ENCODE measurements at regions of chr1 and their contacts with region 1.

Region 1: DNA sequence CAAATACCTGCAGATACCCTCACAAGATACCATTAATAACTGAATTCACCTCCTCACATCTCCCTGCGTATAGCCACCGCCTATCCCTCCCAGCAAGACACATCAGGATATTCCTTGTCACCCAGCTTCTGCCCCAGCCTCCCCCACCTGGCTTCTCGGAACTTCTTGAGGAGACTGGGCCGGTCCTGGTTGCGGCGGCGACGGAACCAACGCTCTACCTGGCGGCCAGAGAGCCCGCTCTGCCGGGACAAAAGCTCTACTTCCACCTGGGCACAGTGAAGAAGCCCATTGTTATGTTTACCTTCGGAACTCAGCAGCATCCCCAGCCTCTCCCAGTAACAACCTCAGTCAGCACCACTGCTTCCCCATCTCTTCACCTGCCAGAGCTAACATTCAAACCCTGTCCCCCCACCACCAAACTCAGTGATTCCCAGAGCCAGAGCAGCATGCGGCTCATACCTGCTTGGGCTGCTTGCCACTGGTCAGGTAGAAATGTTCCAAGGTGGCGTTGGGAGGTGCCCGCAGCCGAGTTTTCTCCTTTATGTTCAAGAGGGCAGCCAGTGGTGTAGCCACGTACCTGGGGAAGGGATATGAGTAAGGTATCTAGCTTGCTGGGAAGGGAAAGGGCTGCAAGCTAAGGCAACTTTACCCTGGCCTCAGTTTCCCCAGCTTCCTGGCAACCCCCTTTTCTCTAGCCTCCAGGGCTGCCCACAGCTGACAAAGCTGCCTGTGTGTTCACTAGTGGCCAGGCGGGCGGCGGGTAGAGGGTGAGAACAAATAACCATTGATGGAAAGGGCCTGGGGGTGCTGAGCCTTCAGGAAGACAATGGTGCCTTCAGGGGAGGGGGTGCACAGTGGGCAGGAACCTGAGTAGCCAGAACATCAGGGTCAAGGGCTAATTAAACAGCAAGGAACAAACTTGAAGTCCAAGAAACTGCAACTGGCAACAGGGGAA is 6.4 kb downstream of the CERS2 start:
- DNase-seq: no peak
- ATAC-seq: no peak
- H3K4me3 ChIP-seq: no peak overlapping the region
- H3K27ac ChIP-seq: no peak overlapping the region
- H3K4me1 ChIP-seq: peaks cover 0 to 41% (median 37%) of the 10 kb centered on the region in 12 donors
- H3K27me3 ChIP-seq: no peaks in the 10 kb centered on the region
- CTCF ChIP-seq: no peak
- POLR2A ChIP-seq: no peak

Region 2: GRCh38 chr1:150931773-150932172 is 36.4 kb before region 1 on chr1:
- intact Hi-C with region 1: loop called in 4 of 10 experiments (anchors 5 kb)
- DNase-seq: no peak
- ATAC-seq: no peak
- H3K4me3 ChIP-seq: no peak overlapping the region
- H3K27ac ChIP-seq: no peak overlapping the region
- H3K4me1 ChIP-seq: peaks cover 0 to 26% (median 8%) of the 10 kb centered on the region in 12 donors
- H3K27me3 ChIP-seq: no peaks in the 10 kb centered on the region
- CTCF ChIP-seq: no peak
- POLR2A ChIP-seq: no peak

Region 3: GRCh38 chr1:150987924-150988323 is 19.7 kb after region 1 on chr1:
- intact Hi-C with region 1: loop called in 1 of 10 experiments (anchors 2 kb)
- DNase-seq: no peak
- ATAC-seq: no peak
- H3K4me3 ChIP-seq: no peak overlapping the region
- H3K27ac ChIP-seq: no peak overlapping the region
- H3K4me1 ChIP-seq: no peaks in the 10 kb centered on the region
- H3K27me3 ChIP-seq: no peaks in the 10 kb centered on the region
- CTCF ChIP-seq: no peak
- POLR2A ChIP-seq: no peak